ENCODE measurements at regions of chr22 and their contacts with region 1.

Region 1: DNA sequence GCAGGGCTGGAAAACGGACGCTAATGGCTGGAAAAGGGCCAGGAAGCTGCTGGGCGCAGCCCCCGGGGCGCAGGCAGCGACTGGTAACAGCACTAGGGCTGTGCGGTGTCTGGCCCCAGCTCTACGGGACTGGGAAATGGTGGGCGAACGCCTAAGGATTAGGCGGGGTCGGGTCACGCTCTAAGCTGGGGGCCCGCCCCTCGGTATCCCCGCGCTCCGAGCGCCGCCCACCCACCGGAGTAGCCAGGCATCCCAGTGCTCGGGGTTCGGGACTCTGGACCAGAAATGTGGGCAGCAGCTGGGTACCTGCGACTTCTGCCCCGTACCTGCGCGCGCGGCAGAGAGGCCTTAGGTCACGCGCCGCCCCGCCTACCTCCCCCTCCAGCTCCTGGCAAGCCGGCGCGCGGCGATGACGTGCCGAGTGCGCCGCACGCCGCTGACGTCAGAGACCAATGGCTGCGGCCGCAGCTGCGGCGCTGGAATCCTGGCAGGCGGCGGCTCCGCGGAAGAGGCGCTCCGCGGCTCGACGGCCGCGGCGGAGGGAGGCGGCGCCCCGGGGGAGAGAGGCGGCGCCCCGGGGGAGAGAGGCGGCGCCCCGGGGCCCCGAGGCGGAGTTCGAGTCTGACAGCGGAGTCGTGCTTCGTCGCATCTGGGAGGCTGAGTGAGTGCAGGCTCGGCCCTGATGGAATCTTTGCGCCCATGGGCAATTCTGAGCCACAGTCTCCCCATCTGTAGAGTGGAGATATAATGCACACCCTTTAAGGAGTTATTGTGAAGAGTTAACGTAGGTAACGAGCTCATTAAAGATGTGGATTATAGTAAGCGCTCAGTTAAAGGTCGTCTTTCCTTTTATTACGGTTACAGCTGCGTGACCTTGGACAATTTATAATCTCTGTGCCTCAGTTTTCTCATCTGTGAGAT is at the starts of genes HPS4 and SRRD:
- DNase-seq: peak; percentile 77
- ATAC-seq: peak; percentile 87
- H3K4me3 ChIP-seq: peak within 1 kb of the TSS; percentile 79 to 94 (median 91)
- H3K27ac ChIP-seq: peak within 1 kb of the TSS; percentile 91
- H3K4me1 ChIP-seq: peaks cover 70% of the 10 kb centered on the region
- H3K27me3 ChIP-seq: no peaks in the 10 kb centered on the region; a peak in 1 of 5 replicates
- CTCF ChIP-seq: no peak; the same call in 1 of the 2 replicates
- EP300 ChIP-seq: 0 out of 4 replicates have a peak, but pooled peaks of 1 of the 2 experiments have one; percentile 9
- POLR2A ChIP-seq: peak; percentile 80 to 96
- RAD21 ChIP-seq: 0 out of 2 replicates have a peak, but pooled peaks have one; percentile 17
- total RNA-seq, gene HPS4: 29.7 and 34.0 TPM in 2 replicates
- total RNA-seq, gene SRRD: 36.6 and 56.5 TPM in 2 replicates

Region 2: DNA sequence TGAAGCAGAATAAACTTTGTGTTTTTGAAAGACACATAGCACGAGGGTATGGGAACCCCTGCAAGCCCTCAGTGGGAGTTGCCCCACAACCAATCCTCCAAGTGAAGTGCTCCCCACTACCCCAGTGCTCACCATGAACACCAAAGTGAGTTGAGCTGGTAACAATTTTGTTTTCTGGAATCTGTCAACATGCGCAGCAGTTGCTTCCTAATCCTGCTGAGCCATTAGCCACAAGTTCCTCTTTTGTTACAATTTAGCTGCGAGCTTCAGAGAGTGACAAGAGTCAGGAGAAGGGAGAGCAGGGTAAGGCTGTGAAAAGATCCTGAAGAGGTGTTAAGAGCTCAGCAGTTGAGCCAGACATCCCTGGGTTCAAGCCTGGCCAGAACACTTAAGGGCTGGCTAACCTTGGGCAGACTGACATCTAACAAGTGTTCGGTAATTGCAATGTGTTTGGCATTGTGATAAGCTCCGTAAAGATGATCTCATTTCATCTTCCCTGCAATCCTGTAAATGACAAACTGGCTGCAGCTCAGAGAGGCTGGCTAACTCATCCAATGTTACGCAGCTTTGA is 78.8 kb before region 1 on chr22:
- CTCF ChIA-PET with region 1: no interaction called
- POLR2A ChIA-PET with region 1: no interaction called
- in situ Hi-C with region 1: no loop called
- intact Hi-C with region 1: no loop called
- DNase-seq: no peak
- ATAC-seq: no peak
- H3K4me3 ChIP-seq: no peak overlapping the region
- H3K27ac ChIP-seq: no peak overlapping the region
- H3K4me1 ChIP-seq: no peaks in the 10 kb centered on the region
- H3K27me3 ChIP-seq: peaks cover 0 to 12% of the 10 kb centered on the region in 2 experiments; a peak in 1 of 5 replicates
- CTCF ChIP-seq: no peak
- EP300 ChIP-seq: no peak
- POLR2A ChIP-seq: no peak
- RAD21 ChIP-seq: no peak

Region 3: GRCh38 chr22:26416670-26417250 is 66.9 kb before region 1 on chr22:
- CTCF ChIA-PET with region 1: no interaction called
- POLR2A ChIA-PET with region 1: no interaction called
- in situ Hi-C with region 1: no loop called
- intact Hi-C with region 1: no loop called
- DNase-seq: no peak
- ATAC-seq: no peak; the same call in 2 of the 3 replicates
- H3K4me3 ChIP-seq: no peak overlapping the region
- H3K27ac ChIP-seq: no peak overlapping the region
- H3K4me1 ChIP-seq: no peaks in the 10 kb centered on the region
- H3K27me3 ChIP-seq: peaks cover 2 to 31% of the 10 kb centered on the region in 2 experiments; a peak in 2 of 5 replicates
- CTCF ChIP-seq: no peak
- EP300 ChIP-seq: no peak
- POLR2A ChIP-seq: no peak
- RAD21 ChIP-seq: no peak

Region 4: GRCh38 chr22:26461188-26461810 is 22.4 kb before region 1 on chr22:
- CTCF ChIA-PET with region 1: no interaction called
- POLR2A ChIA-PET with region 1: interaction called, 10 read pairs
- in situ Hi-C with region 1: no loop called
- intact Hi-C with region 1: no loop called
- DNase-seq: peak; percentile 24
- ATAC-seq: peak; percentile 89
- H3K4me3 ChIP-seq: no peak overlapping the region
- H3K27ac ChIP-seq: no peak overlapping the region
- H3K4me1 ChIP-seq: peaks cover 16% of the 10 kb centered on the region
- H3K27me3 ChIP-seq: no peaks in the 10 kb centered on the region
- CTCF ChIP-seq: peak; percentile 73
- EP300 ChIP-seq: no peak
- POLR2A ChIP-seq: no peak
- RAD21 ChIP-seq: 0 out of 2 replicates have a peak, but pooled peaks have one; percentile 15

Region 5: DNA sequence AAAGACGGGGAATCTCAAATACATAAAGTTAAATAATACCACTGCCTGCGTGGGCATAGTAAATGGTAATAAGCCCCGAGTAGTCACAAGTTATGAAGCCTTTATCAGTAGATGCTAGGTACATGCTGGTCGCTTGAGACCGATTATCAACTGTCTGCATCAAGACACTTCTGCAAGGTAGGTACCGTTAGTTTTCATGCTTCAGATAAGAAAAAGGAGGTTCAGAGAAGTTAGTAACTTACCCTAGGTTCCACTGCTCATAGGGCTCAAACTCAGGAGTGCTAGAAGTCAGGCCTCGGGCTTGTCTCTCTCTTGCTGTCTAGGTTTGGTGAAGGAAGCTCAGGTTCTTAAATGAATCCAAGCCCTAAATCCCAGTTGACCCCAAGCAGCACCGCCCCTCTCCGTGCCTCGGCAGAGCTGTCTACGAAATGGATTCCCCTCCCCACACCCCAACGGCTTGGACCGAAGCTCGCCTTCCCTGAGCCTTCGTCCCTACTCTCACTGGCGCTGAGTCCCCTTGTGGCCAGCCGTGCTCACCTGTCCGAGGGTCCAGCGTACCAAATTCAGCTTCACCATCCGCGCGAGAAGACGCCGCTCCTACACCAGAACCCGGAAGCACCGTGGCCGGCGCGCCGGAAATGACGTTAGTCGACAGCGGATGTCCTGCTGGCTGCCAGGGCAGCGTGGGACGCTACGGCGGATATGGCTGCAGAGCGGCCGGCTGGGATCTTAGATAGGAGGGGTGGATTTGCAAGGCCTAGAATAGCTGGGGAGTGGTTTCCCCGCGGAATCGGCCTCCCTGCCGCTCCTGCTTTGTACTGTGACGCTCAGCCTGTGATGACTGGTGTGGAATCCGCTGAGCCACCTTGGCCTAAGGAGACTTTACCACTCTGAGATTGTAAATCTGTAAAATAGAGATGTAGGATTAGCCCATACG is 28.4 kb after region 1 on chr22 and contains the start of gene TFIP11:
- CTCF ChIA-PET with region 1: no interaction called
- POLR2A ChIA-PET with region 1: interaction called, 27 read pairs
- in situ Hi-C with region 1: no loop called
- intact Hi-C with region 1: loop called (anchors 5 kb)
- DNase-seq: peak; percentile 94
- ATAC-seq: peak; percentile 99
- H3K4me3 ChIP-seq: peak within 1 kb of the TSS; percentile 85 to 99 (median 92)
- H3K27ac ChIP-seq: peak within 1 kb of the TSS; percentile 73
- H3K4me1 ChIP-seq: peaks cover 21% of the 10 kb centered on the region
- H3K27me3 ChIP-seq: no peaks in the 10 kb centered on the region; a peak in 1 of 5 replicates
- CTCF ChIP-seq: peak; percentile 75
- EP300 ChIP-seq: no peak
- POLR2A ChIP-seq: peak; percentile 75 to 84
- RAD21 ChIP-seq: peak; percentile 65
- total RNA-seq, gene TFIP11: 20.8 and 22.8 TPM in 2 replicates

Region 6: GRCh38 chr22:26517429-26517828 is 33.7 kb after region 1 on chr22:
- CTCF ChIA-PET with region 1: no interaction called
- POLR2A ChIA-PET with region 1: interaction called, 27 read pairs
- in situ Hi-C with region 1: no loop called
- intact Hi-C with region 1: loop called (anchors 5 kb)
- DNase-seq: no peak
- ATAC-seq: no peak
- H3K4me3 ChIP-seq: no peak overlapping the region
- H3K27ac ChIP-seq: no peak overlapping the region
- H3K4me1 ChIP-seq: peaks cover 29% of the 10 kb centered on the region
- H3K27me3 ChIP-seq: no peaks in the 10 kb centered on the region; a peak in 1 of 5 replicates
- CTCF ChIP-seq: no peak
- EP300 ChIP-seq: no peak
- POLR2A ChIP-seq: no peak
- RAD21 ChIP-seq: no peak

Measured in HepG2 (cell line).